ENCODE measurements at regions of chr15 and their contacts with region 1.

Region 1: GRCh38 chr15:70875001-70875782 is 17.0 kb downstream of the THAP10 start:
- DNase-seq: peak; percentile 58
- ATAC-seq: peak; percentile 70
- H3K4me3 ChIP-seq: no peak overlapping the region
- H3K27ac ChIP-seq: no peak overlapping the region
- H3K4me1 ChIP-seq: peaks cover 7% of the 10 kb centered on the region; the same call in 1 of the 2 replicates
- H3K27me3 ChIP-seq: no peaks in the 10 kb centered on the region
- CTCF ChIP-seq: peak; percentile 75
- POLR2A ChIP-seq: no peak
- RAD21 ChIP-seq: peak; percentile 81

Region 2: GRCh38 chr15:69475769-69476358 is 1399.3 kb before region 1 on chr15:
- CTCF ChIA-PET with region 1: no interaction called
- POLR2A ChIA-PET with region 1: no interaction called
- dilution Hi-C with region 1: no loop called
- in situ Hi-C with region 1: no loop called
- intact Hi-C with region 1: loop called (anchors 10 kb)
- DNase-seq: peak; percentile 63
- ATAC-seq: peak; percentile 93
- H3K4me3 ChIP-seq: no peak overlapping the region
- H3K27ac ChIP-seq: no peak overlapping the region
- H3K4me1 ChIP-seq: peaks cover 9% of the 10 kb centered on the region
- H3K27me3 ChIP-seq: peaks cover 11% of the 10 kb centered on the region
- CTCF ChIP-seq: peak; percentile 92
- POLR2A ChIP-seq: no peak
- RAD21 ChIP-seq: peak; percentile 94

Region 3: DNA sequence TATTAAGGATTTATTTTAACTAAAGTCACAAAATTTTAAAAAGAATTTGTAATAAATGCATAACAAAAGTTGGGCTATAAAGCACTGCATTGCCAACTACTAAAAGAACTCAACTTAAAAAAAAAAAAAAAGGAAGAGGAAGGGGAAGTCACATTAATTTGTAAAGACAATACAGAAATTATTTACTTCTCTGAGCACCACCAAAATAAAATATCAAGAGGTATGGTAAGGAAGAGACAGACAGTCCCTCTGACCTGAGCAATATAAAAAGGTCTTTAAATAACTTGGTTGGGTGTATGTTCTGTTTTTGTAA is 195.3 kb before region 1 on chr15:
- CTCF ChIA-PET with region 1: interaction called, 4 read pairs
- POLR2A ChIA-PET with region 1: no interaction called
- dilution Hi-C with region 1: no loop called
- in situ Hi-C with region 1: loop called (anchors 10 kb)
- intact Hi-C with region 1: loop called (anchors 2 kb)
- DNase-seq: no peak
- ATAC-seq: no peak
- H3K4me3 ChIP-seq: no peak overlapping the region
- H3K27ac ChIP-seq: no peak overlapping the region
- H3K4me1 ChIP-seq: peaks cover 4% of the 10 kb centered on the region; the same call in 1 of the 2 replicates
- H3K27me3 ChIP-seq: no peaks in the 10 kb centered on the region
- CTCF ChIP-seq: no peak
- POLR2A ChIP-seq: no peak
- RAD21 ChIP-seq: no peak

Region 4: DNA sequence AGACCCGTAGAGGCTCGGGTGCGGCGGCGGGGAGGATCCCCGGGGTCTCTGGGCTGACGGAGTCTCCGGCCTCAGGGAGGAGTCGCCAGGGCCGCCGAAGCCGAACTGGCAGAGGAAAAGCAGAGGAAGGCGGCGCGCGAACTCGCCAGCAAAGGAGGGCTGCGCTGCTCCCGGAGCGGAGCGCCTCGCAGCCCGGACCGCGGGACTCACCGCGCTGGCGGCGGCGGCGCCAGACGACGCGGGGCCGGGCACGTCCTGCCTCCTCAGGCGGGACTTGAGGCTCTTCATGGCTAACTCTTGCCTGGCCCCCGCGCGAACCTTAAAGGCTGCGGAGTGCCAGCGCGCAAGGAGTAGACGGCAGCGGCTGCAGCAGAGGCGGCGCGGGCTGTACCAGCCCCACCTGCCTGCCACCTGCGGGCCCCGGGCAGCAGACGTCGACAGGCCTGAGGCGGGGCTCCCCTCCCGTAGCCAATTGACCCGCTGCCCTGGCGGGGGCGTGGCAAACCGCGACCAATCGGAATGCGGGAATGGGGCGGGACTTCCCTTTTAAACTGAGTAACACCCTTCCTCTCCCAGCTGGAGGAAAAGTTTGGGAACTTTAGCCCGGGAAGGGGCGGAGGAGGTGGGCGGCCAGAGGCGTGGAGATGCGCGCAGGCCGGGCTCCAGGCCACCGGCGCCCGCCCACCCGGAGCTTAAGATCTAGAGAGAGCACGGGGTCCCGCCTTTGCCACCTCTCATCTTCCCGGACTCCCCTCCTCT is 111.9 kb before region 1 on chr15 and contains the start of gene UACA:
- CTCF ChIA-PET with region 1: no interaction called
- POLR2A ChIA-PET with region 1: no interaction called
- dilution Hi-C with region 1: no loop called
- in situ Hi-C with region 1: no loop called
- intact Hi-C with region 1: loop called (anchors 5 kb)
- DNase-seq: peak; percentile 96
- ATAC-seq: peak; percentile 90
- H3K4me3 ChIP-seq: peak within 1 kb of the TSS; percentile 86
- H3K27ac ChIP-seq: peak within 1 kb of the TSS; percentile 90
- H3K4me1 ChIP-seq: peaks cover 7% of the 10 kb centered on the region
- H3K27me3 ChIP-seq: no peaks in the 10 kb centered on the region
- CTCF ChIP-seq: no peak
- POLR2A ChIP-seq: peak; percentile 77
- RAD21 ChIP-seq: no peak
- total RNA-seq, gene UACA: 505 and 507 TPM in 2 replicates

Region 5: GRCh38 chr15:70826634-70827033 is 48.6 kb before region 1 on chr15:
- CTCF ChIA-PET with region 1: interaction called, 28 read pairs
- POLR2A ChIA-PET with region 1: no interaction called
- dilution Hi-C with region 1: no loop called
- in situ Hi-C with region 1: loop called (anchors 10 kb)
- intact Hi-C with region 1: loop called (anchors 1 kb)
- DNase-seq: peak; percentile 74
- ATAC-seq: peak; percentile 80
- H3K4me3 ChIP-seq: no peak overlapping the region
- H3K27ac ChIP-seq: no peak overlapping the region
- H3K4me1 ChIP-seq: peaks cover 2% of the 10 kb centered on the region
- H3K27me3 ChIP-seq: no peaks in the 10 kb centered on the region
- CTCF ChIP-seq: no peak
- POLR2A ChIP-seq: no peak
- RAD21 ChIP-seq: no peak

Region 6: DNA sequence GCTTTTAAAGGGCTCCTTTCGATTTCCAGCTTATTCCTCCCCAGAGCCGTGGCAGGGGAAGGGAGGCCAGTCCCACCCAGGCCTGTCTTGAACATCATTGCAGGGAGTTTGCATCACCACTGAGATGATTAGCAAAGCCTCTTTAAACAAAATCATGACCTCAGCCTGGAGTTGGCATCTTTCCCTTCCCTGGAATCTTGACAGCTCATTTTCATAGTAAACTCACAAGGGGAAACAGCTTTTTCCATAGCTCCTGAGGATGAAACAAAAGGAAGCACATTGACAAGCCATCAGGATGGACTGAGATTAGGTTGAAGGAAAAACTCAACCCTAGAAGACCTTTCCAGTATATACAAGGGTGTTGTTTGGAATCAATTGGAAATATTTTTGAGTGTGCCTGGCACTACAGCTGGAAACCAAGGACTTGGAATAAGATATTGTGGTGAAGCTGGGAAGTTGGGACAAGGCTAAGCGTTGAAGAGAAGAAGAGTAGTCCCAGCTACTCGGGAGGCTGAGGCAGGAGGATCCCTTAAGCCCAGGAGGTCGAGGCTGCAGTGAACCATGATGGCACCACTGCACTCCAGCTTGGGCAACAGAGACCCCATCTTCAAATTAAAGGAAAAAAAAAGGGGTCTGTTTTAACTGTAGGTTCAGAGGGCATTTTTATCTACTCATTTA is 18.2 kb before region 1 on chr15:
- CTCF ChIA-PET with region 1: interaction called, 12 read pairs
- POLR2A ChIA-PET with region 1: no interaction called
- dilution Hi-C with region 1: no loop called
- in situ Hi-C with region 1: no loop called
- intact Hi-C with region 1: no loop called
- DNase-seq: peak; percentile 100
- ATAC-seq: peak; percentile 62
- H3K4me3 ChIP-seq: no peak overlapping the region
- H3K27ac ChIP-seq: peak overlapping the region; percentile 87
- H3K4me1 ChIP-seq: peaks cover 17% of the 10 kb centered on the region
- H3K27me3 ChIP-seq: no peaks in the 10 kb centered on the region
- CTCF ChIP-seq: no peak
- POLR2A ChIP-seq: peak; percentile 85
- RAD21 ChIP-seq: peak; percentile 15; the same call in 1 of the 2 replicates

Region 7: GRCh38 chr15:70863450-70864218 is 11.6 kb before region 1 on chr15:
- CTCF ChIA-PET with region 1: interaction called, 12 read pairs
- POLR2A ChIA-PET with region 1: no interaction called
- dilution Hi-C with region 1: no loop called
- in situ Hi-C with region 1: no loop called
- intact Hi-C with region 1: no loop called
- DNase-seq: peak; percentile 92
- ATAC-seq: peak; percentile 92
- H3K4me3 ChIP-seq: no peak overlapping the region
- H3K27ac ChIP-seq: peak overlapping the region; percentile 82
- H3K4me1 ChIP-seq: peaks cover 20% of the 10 kb centered on the region
- H3K27me3 ChIP-seq: no peaks in the 10 kb centered on the region
- CTCF ChIP-seq: no peak
- POLR2A ChIP-seq: 0 out of 2 replicates have a peak, but pooled peaks have one; percentile 19
- RAD21 ChIP-seq: no peak

Measured in IMR-90 (cell line).